ENCODE measurements at regions of chr15 and their contacts with region 1.

Region 1: GRCh38 chr15:101179341-101180153 is 72.3 kb downstream of the CHSY1 start:
- DNase-seq: no peak
- ATAC-seq: no peak
- H3K4me3 ChIP-seq: no peak overlapping the region
- H3K27ac ChIP-seq: peak overlapping the region in 5 of 10 donors; percentile 6 to 37 (median 27)
- H3K4me1 ChIP-seq: peaks cover 7 to 82% (median 45%) of the 10 kb centered on the region in 9 donors
- H3K27me3 ChIP-seq: no peaks in the 10 kb centered on the region
- CTCF ChIP-seq: no peak

Region 2: DNA sequence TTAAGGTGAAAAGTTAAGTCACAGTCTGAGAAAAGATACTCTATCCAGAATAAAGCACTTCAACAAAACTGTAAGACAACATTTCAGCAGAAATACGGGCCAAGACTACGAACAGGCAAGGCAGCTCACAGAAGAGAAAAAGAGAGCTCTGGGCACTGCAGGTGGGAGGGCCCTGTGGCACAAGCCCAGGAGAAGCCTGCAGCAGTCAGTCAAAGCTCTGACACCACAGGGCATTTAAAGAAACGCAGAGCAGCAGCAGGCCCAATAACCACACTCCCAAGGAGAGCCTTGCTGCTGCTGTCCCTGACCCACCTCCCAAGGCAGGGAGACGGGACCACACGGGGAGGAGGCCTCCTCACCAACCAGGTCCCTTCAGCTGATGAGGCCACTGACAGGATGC is 53.1 kb after region 1 on chr15:
- intact Hi-C with region 1: loop called in 1 of 10 experiments (anchors 5 kb)
- DNase-seq: no peak
- ATAC-seq: peak; percentile 12 to 91 (median 74)
- H3K4me3 ChIP-seq: no peak overlapping the region
- H3K27ac ChIP-seq: peak overlapping the region in 1 of 10 donors; percentile 32
- H3K4me1 ChIP-seq: peaks cover 4 to 66% (median 16%) of the 10 kb centered on the region in 9 donors
- H3K27me3 ChIP-seq: no peaks in the 10 kb centered on the region
- CTCF ChIP-seq: no peak

Region 3: GRCh38 chr15:101242160-101242998 is 62.8 kb after region 1 on chr15:
- intact Hi-C with region 1: loop called in 2 of 10 experiments (anchors 2 to 10 kb)
- DNase-seq: peak in 1 of 2 donors; percentile 34
- ATAC-seq: peak in 7 of 8 donors; percentile 37 to 70 (median 45)
- H3K4me3 ChIP-seq: peak overlapping the region in 2 of 10 donors; percentile 7 to 30
- H3K27ac ChIP-seq: peak overlapping the region in 8 of 10 donors; percentile 4 to 80 (median 46)
- H3K4me1 ChIP-seq: peaks cover 10 to 100% (median 75%) of the 10 kb centered on the region in 9 donors
- H3K27me3 ChIP-seq: no peaks in the 10 kb centered on the region
- CTCF ChIP-seq: no peak

Measured in heart right ventricle (tissue), 16 donors.